ENCODE measurements at regions of chr1 and their contacts with region 1.

Region 1: DNA sequence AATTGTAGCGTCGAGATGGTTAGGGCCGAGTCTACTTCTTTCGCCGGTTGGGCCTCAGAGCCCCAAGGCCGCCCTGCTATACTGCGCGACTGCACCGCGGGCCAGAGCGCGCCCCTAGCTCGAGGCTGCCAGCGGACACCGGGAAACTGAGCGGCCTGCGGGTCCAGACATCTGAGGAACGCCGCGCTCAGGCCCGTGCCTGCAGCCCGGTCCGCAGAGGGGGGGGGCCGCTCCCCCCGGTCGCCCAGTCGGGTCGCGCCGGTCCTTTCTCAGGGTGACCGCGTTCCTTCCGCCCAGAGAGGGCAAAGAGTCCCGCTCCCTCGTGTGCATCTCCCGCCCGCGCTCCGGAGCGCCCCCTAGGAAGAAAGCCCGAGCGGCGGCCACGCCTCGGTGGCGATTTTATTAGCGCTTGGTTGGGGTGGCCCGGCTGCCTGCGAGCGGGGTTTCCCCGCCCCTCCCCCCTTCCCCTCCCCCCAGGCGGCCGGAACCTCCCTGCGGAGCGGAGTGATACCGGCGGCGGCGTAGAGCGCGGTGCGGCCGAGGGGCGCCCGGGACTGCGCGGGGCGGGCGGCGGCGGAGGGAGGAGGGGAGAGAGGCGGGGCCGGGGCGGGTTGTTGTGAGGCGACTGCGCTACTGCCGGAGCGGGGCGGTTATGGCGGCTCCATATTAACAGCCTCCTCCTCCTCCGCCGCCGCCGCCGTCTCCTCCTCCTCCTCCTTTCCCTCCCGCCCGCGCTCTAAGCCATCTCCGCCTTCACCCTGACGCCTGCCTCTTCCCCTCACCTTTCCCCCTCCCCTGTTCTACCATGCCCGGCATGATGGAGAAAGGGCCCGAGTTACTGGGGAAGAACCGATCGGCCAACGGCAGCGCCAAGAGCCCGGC is at the start of gene RCOR3:
- DNase-seq: peak; percentile 88

Region 2: GRCh38 chr1:211247921-211248320 is 11.1 kb before region 1 on chr1:
- CTCF ChIA-PET with region 1: interaction called, 5 read pairs
- POLR2A ChIA-PET with region 1: interaction called, 10 read pairs
- DNase-seq: no peak

Measured in HEK293T (cell line).